ENCODE measurements at regions of chr12 and their contacts with region 1.

Region 1: DNA sequence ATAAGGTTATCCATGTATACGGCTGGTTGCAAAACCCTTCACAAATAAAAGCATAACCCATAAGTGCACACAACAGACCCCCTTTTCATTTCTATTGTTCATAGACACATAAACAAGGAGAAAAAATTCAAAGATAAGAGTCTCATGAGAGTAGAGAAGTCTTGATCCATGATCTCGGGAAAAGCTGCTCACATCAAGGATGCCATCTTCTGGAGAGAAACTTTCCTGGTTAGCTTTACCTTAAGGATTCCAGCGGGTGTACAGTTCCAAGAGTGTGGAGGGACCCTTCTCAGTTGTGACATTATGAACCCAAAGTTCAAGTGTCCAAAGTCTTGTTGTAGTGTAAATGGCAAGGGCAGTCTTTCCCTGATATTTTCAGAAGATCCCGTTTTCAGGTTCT is 144.5 kb downstream of the LLPH start:
- DNase-seq: no peak
- ATAC-seq: no peak
- H3K4me3 ChIP-seq: no peak overlapping the region
- H3K27ac ChIP-seq: no peak overlapping the region
- H3K4me1 ChIP-seq: peaks cover 16% of the 10 kb centered on the region
- H3K27me3 ChIP-seq: no peaks in the 10 kb centered on the region
- CTCF ChIP-seq: peak; percentile 33
- EP300 ChIP-seq: no peak
- POLR2A ChIP-seq: no peak
- RAD21 ChIP-seq: no peak

Region 2: GRCh38 chr12:65556681-65557437 is 429.2 kb before region 1 on chr12:
- CTCF ChIA-PET with region 1: interaction called, 5 read pairs
- POLR2A ChIA-PET with region 1: no interaction called
- in situ Hi-C with region 1: no loop called
- intact Hi-C with region 1: loop called (anchors 5 kb)
- DNase-seq: peak; percentile 53
- ATAC-seq: peak; percentile 100
- H3K4me3 ChIP-seq: no peak overlapping the region
- H3K27ac ChIP-seq: no peak overlapping the region
- H3K4me1 ChIP-seq: 0 out of 2 replicates have a peak, but pooled peaks cover 6% of the 10 kb centered on the region
- H3K27me3 ChIP-seq: peaks cover 0 to 4% of the 10 kb centered on the region in 2 experiments; a peak in 2 of 5 replicates
- CTCF ChIP-seq: peak; percentile 96
- EP300 ChIP-seq: no peak
- POLR2A ChIP-seq: no peak
- RAD21 ChIP-seq: peak; percentile 92

Region 3: GRCh38 chr12:65740873-65741600 is 245.0 kb before region 1 on chr12:
- CTCF ChIA-PET with region 1: no interaction called
- POLR2A ChIA-PET with region 1: no interaction called
- in situ Hi-C with region 1: no loop called
- intact Hi-C with region 1: loop called (anchors 10 kb)
- DNase-seq: peak; percentile 69
- ATAC-seq: peak; percentile 93
- H3K4me3 ChIP-seq: peak overlapping the region; percentile 66 to 81 (median 80)
- H3K27ac ChIP-seq: no peak overlapping the region
- H3K4me1 ChIP-seq: peaks cover 7% of the 10 kb centered on the region; the same call in 1 of the 2 replicates
- H3K27me3 ChIP-seq: peaks cover 3 to 14% of the 10 kb centered on the region in 2 experiments; a peak in 3 of 5 replicates
- CTCF ChIP-seq: no peak
- EP300 ChIP-seq: no peak
- POLR2A ChIP-seq: 0 out of 4 replicates have a peak, but pooled peaks of 1 of the 2 experiments have one; percentile 33
- RAD21 ChIP-seq: no peak

Region 4: GRCh38 chr12:65923228-65923627 is 62.8 kb before region 1 on chr12:
- CTCF ChIA-PET with region 1: interaction called, 3 read pairs
- POLR2A ChIA-PET with region 1: no interaction called
- in situ Hi-C with region 1: no loop called
- intact Hi-C with region 1: loop called (anchors 2 kb)
- DNase-seq: no peak
- ATAC-seq: peak; percentile 28; the same call in 2 of the 3 replicates
- H3K4me3 ChIP-seq: no peak overlapping the region
- H3K27ac ChIP-seq: peak overlapping the region; percentile 24
- H3K4me1 ChIP-seq: peaks cover 62% of the 10 kb centered on the region
- H3K27me3 ChIP-seq: no peaks in the 10 kb centered on the region
- CTCF ChIP-seq: no peak
- EP300 ChIP-seq: no peak
- POLR2A ChIP-seq: no peak
- RAD21 ChIP-seq: no peak

Region 5: GRCh38 chr12:65952737-65953209 is 33.3 kb before region 1 on chr12:
- CTCF ChIA-PET with region 1: no interaction called
- POLR2A ChIA-PET with region 1: no interaction called
- in situ Hi-C with region 1: no loop called
- intact Hi-C with region 1: no loop called
- DNase-seq: peak; percentile 29
- ATAC-seq: no peak; the same call in 2 of the 3 replicates
- H3K4me3 ChIP-seq: no peak overlapping the region
- H3K27ac ChIP-seq: no peak overlapping the region
- H3K4me1 ChIP-seq: peaks cover 50% of the 10 kb centered on the region
- H3K27me3 ChIP-seq: no peaks in the 10 kb centered on the region
- CTCF ChIP-seq: no peak
- EP300 ChIP-seq: no peak
- POLR2A ChIP-seq: no peak
- RAD21 ChIP-seq: no peak

Measured in HepG2 (cell line).